Left lung (tissue), 14 donors: ENCODE measurements at regions of chr19 and their contacts with region 1.

Region 1: DNA sequence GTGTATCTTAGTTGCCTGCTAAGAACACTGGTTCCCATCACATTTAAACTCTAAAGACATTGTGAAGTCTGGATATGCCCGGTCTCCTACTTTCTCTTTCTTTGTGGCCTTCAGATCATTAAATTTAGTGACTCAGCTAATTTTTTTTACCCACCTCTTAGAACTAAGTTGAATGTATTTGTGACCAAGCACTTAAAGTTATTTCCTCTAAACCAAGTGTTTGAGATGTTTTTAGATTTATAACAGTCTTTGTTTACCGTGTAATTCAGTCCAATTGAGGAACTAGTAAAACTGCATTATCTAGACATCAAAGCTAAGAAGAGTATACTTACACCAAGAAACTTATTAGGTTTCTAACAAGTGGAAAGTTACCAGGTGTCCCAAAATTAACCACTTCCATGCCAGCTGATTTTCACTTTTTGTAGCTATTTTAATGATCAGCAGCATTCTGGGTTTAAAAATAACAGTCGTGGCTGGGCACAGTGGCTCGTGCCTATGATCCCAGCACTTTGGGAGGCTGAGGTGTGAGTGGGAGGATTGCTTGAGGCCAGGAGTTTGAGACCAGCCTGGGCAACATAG is 53.1 kb downstream of the ARHGAP35 start:
- DNase-seq: no peak
- ATAC-seq: peak; percentile 68
- H3K4me3 ChIP-seq: no peak overlapping the region
- H3K27ac ChIP-seq: peak overlapping the region; percentile 38 to 40
- H3K4me1 ChIP-seq: peaks cover 22 to 37% of the 10 kb centered on the region in 2 donors
- H3K27me3 ChIP-seq: no peaks in the 10 kb centered on the region
- CTCF ChIP-seq: no peak

Region 2: DNA sequence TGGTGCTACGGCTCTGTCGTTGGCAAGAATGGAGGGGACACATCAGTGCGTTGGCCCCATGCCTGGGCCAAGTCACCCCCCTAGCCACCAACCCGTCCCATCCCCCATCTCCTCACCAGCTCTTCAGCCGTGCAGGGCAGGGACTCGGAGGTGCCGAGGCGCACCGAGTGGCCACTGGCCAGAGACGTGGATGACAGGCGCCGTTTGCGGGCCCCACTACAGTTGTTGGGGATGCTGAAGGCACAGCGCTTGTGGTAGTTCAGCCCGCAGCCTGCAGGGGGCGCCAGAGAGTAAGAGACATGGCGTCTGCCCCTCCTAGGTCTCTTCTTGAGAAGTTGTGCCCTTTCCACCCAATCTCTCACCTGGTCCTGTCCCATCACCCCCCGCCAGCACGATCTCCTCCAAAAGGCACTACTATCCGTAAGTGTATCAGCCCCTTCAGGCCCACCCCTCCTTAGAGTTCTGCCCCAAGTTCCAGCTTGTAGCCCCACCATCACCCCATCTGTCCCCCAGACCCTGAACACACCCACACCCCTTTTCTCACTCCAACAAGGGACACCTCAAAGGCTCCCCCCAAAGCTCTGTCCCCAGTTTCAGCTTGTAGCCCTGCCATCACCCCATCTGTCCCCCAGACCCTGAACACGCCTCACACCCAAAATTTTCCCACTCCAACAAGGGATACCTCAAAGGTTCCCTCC is 209.4 kb before region 1 on chr19:
- intact Hi-C with region 1: no loop called
- DNase-seq: peak in 3 of 4 donors; percentile 57 to 97 (median 68)
- ATAC-seq: peak; percentile 92
- H3K4me3 ChIP-seq: no peak overlapping the region
- H3K27ac ChIP-seq: no peak overlapping the region
- H3K4me1 ChIP-seq: no peaks in the 10 kb centered on the region
- H3K27me3 ChIP-seq: no peaks in the 10 kb centered on the region
- CTCF ChIP-seq: peak; percentile 95 to 99

Region 3: GRCh38 chr19:46860125-46860845 is 53.7 kb before region 1 on chr19:
- intact Hi-C with region 1: loop called in 1 of 2 experiments (anchors 10 kb)
- DNase-seq: peak; percentile 97 to 99 (median 98)
- ATAC-seq: peak; percentile 85
- H3K4me3 ChIP-seq: peak overlapping the region; percentile 74 to 88
- H3K27ac ChIP-seq: peak overlapping the region; percentile 94 to 98
- H3K4me1 ChIP-seq: peaks cover 11 to 70% of the 10 kb centered on the region in 2 donors
- H3K27me3 ChIP-seq: no peaks in the 10 kb centered on the region
- CTCF ChIP-seq: no peak